ENCODE measurements at regions of chr5 and their contacts with region 1.

Region 1: GRCh38 chr5:170638454-170639220 is 134.8 kb downstream of the KCNIP1 start:
- DNase-seq: no peak
- ATAC-seq: peak; percentile 92
- H3K4me3 ChIP-seq: no peak overlapping the region
- H3K27ac ChIP-seq: no peak overlapping the region
- H3K4me1 ChIP-seq: no peaks in the 10 kb centered on the region
- H3K27me3 ChIP-seq: peaks cover 3 to 5% of the 10 kb centered on the region in 2 experiments; a peak in 3 of 4 replicates
- CTCF ChIP-seq: peak; percentile 80 to 86 (median 85)
- EP300 ChIP-seq: no peak
- POLR2A ChIP-seq: no peak
- RAD21 ChIP-seq: peak; percentile 78

Region 2: GRCh38 chr5:170740551-170741205 is 102.0 kb after region 1 on chr5:
- CTCF ChIA-PET with region 1: interaction called, 5 read pairs
- POLR2A ChIA-PET with region 1: no interaction called
- RAD21 ChIA-PET with region 1: no interaction called
- SMC1A ChIA-PET with region 1: interaction called, 3 read pairs
- in situ Hi-C with region 1: no loop called
- intact Hi-C with region 1: loop called (anchors 5 kb)
- DNase-seq: no peak
- ATAC-seq: no peak
- H3K4me3 ChIP-seq: no peak overlapping the region
- H3K27ac ChIP-seq: no peak overlapping the region
- H3K4me1 ChIP-seq: no peaks in the 10 kb centered on the region
- H3K27me3 ChIP-seq: peaks cover 0 to 7% of the 10 kb centered on the region in 2 experiments; a peak in 3 of 4 replicates
- CTCF ChIP-seq: no peak
- EP300 ChIP-seq: no peak
- POLR2A ChIP-seq: no peak
- RAD21 ChIP-seq: no peak

Region 3: GRCh38 chr5:170896779-170897178 is 258.1 kb after region 1 on chr5:
- CTCF ChIA-PET with region 1: interaction called, 3 read pairs
- POLR2A ChIA-PET with region 1: no interaction called
- RAD21 ChIA-PET with region 1: interaction called, 4 read pairs
- SMC1A ChIA-PET with region 1: no interaction called
- in situ Hi-C with region 1: no loop called
- intact Hi-C with region 1: loop called (anchors 2 kb)
- DNase-seq: no peak
- ATAC-seq: peak; percentile 41; the same call in 1 of the 3 replicates
- H3K4me3 ChIP-seq: no peak overlapping the region
- H3K27ac ChIP-seq: no peak overlapping the region
- H3K4me1 ChIP-seq: no peaks in the 10 kb centered on the region
- H3K27me3 ChIP-seq: no peaks in the 10 kb centered on the region
- CTCF ChIP-seq: peak; percentile 13 to 38 (median 36); a peak in 4 of 6 replicates
- EP300 ChIP-seq: no peak
- POLR2A ChIP-seq: no peak
- RAD21 ChIP-seq: 0 out of 2 replicates have a peak, but pooled peaks have one; percentile 31